Pancreas (tissue), 10 donors: ENCODE measurements at regions of chr21 and their contacts with region 1.

Region 1: DNA sequence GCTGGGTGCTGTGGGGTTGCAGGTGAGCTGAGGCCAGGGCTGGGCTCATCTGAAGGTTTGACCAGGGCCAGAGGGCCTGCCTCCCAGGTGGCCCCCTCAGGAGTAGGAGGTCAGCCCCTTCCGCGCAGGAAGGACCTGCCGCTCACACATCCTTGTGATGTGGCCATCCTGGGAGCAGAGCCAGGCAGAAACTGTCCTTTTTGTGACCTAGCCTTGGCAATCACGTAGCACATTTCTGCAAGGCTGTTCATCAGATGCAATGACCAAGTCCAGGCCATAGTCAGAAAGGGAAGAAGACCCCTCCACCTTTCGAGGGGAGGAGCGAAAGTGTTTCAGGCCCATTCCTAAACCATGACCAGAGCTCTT is 55.5 kb upstream of the TRAPPC10 start:
- DNase-seq: peak in 1 of 6 donors; percentile 54
- ATAC-seq: peak in 2 of 4 donors; percentile 20 to 31
- H3K4me3 ChIP-seq: no peak overlapping the region
- H3K27ac ChIP-seq: no peak overlapping the region
- H3K4me1 ChIP-seq: no peaks in the 10 kb centered on the region
- H3K27me3 ChIP-seq: no peaks in the 10 kb centered on the region
- CTCF ChIP-seq: no peak

Region 2: GRCh38 chr21:43805275-43805800 is 151.3 kb before region 1 on chr21:
- intact Hi-C with region 1: loop called in 1 of 3 experiments (anchors 10 kb)
- DNase-seq: no peak
- ATAC-seq: no peak
- H3K4me3 ChIP-seq: no peak overlapping the region
- H3K27ac ChIP-seq: no peak overlapping the region
- H3K4me1 ChIP-seq: no peaks in the 10 kb centered on the region
- H3K27me3 ChIP-seq: no peaks in the 10 kb centered on the region
- CTCF ChIP-seq: no peak

Region 3: DNA sequence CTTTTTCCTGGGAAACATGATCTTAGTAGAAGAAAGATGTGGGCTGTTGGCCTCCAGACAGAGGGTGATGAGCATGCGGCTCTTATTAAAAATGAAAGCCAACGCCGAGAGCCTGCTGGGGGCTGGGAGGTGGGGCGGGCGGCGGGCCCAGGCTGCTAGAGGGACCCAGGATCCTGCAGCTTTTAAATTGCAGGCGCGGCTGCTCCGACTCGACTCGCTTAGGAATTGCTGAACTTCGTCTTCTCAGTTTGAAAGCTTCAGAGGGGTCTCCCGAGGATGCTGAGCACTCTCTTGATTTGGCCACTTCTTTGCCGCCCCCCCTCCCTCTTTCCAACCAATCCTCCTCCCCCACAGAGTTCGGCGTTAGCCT is 90.4 kb before region 1 on chr21:
- intact Hi-C with region 1: loop called in 1 of 3 experiments (anchors 10 kb)
- DNase-seq: peak in 1 of 6 donors; percentile 50
- ATAC-seq: peak in 3 of 4 donors; percentile 17 to 50 (median 42)
- H3K4me3 ChIP-seq: peak overlapping the region; percentile 3 to 80 (median 78)
- H3K27ac ChIP-seq: peak overlapping the region; percentile 69 to 92 (median 81)
- H3K4me1 ChIP-seq: peaks cover 21 to 27% (median 27%) of the 10 kb centered on the region in 3 donors
- H3K27me3 ChIP-seq: no peaks in the 10 kb centered on the region
- CTCF ChIP-seq: no peak